SK-N-SH (cell line): ENCODE measurements at regions of chr7 and their contacts with region 1.

Region 1: DNA sequence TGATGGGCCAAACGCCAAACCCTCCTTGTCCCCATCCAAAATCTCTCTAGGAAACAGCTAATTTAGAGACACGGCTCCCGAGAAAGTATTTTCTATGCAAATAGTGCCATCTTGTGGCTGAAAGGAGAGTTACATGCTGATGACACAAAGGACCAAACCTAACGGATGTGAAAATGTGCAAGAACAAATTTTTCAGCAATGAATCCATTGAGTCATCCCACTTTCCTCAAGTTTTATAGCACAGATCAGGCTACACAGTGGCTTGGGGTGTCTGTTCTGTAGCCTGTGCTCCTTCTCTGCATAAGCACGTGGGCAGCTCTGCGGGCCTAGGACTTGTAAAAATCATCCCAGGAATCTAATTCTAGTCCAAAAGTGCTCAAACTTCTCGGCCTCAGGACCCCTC is 154.8 kb upstream of the PRR15 start:
- DNase-seq: peak; percentile 76
- H3K4me3 ChIP-seq: no peak overlapping the region
- H3K27ac ChIP-seq: no peak overlapping the region
- H3K4me1 ChIP-seq: no peaks in the 10 kb centered on the region; a peak in 1 of 4 replicates
- H3K27me3 ChIP-seq: 0 out of 2 replicates have a peak, but pooled peaks cover 4% of the 10 kb centered on the region
- CTCF ChIP-seq: peak; percentile 97
- EP300 ChIP-seq: no peak
- RAD21 ChIP-seq: peak; percentile 99

Region 2: GRCh38 chr7:28955718-28956619 is 452.9 kb before region 1 on chr7:
- CTCF ChIA-PET with region 1: interaction called, 49 read pairs
- POLR2A ChIA-PET with region 1: no interaction called
- DNase-seq: peak; percentile 87
- H3K4me3 ChIP-seq: peak overlapping the region; percentile 52 to 59
- H3K27ac ChIP-seq: peak overlapping the region in 1 of 2 experiments; percentile 100; a peak in 2 of 4 replicates
- H3K4me1 ChIP-seq: peaks cover 11 to 66% of the 10 kb centered on the region in 2 experiments
- H3K27me3 ChIP-seq: peaks cover 36% of the 10 kb centered on the region
- CTCF ChIP-seq: peak; percentile 32
- EP300 ChIP-seq: no peak
- RAD21 ChIP-seq: peak; percentile 63

Region 3: GRCh38 chr7:29105752-29106668 is 302.8 kb before region 1 on chr7:
- CTCF ChIA-PET with region 1: interaction called, 95 read pairs
- POLR2A ChIA-PET with region 1: no interaction called
- DNase-seq: peak; percentile 43
- H3K4me3 ChIP-seq: no peak overlapping the region; a peak in 1 of 4 replicates
- H3K27ac ChIP-seq: no peak overlapping the region; a peak in 1 of 4 replicates
- H3K4me1 ChIP-seq: peaks cover 0 to 16% of the 10 kb centered on the region in 2 experiments; a peak in 1 of 4 replicates
- H3K27me3 ChIP-seq: peaks cover 10% of the 10 kb centered on the region
- CTCF ChIP-seq: peak; percentile 94
- EP300 ChIP-seq: no peak
- RAD21 ChIP-seq: peak; percentile 98

Region 4: DNA sequence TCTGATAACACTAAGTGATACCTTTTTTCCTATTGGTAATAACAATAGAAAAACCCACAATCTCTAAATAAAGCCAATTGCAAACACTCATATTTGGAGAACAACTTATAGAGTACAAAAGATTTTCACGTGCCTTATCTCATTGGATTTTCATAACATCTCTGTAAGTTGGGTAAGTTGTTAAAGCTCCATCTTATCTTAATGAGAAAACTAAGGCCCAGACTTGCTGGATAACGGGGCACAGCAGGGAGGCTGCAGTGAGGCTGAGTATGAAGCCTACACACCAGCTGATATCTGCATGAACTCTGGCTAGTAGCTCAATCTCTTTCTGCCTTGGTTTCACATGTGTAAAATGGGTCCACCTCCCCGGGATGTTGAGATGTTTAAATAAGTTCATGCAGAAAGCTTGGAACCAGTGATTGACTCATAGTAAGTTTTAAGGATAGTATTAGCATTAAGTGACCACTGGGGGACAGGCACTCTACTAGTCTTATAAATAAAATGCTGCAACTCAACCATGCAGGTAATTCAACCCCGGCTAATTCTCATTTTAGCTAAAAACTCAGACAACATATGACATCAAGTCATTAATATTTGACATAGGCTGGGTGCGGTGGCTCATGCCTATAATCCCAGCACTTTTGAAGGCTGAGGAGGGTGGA is 289.2 kb before region 1 on chr7:
- CTCF ChIA-PET with region 1: interaction called, 24 read pairs
- POLR2A ChIA-PET with region 1: no interaction called
- DNase-seq: no peak
- H3K4me3 ChIP-seq: no peak overlapping the region
- H3K27ac ChIP-seq: no peak overlapping the region
- H3K4me1 ChIP-seq: no peaks in the 10 kb centered on the region
- H3K27me3 ChIP-seq: 0 out of 2 replicates have a peak, but pooled peaks cover 5% of the 10 kb centered on the region
- CTCF ChIP-seq: no peak
- EP300 ChIP-seq: no peak
- RAD21 ChIP-seq: no peak

Region 5: GRCh38 chr7:29194594-29195427 is 214.0 kb before region 1 on chr7 and contains the start of gene CHN2:
- CTCF ChIA-PET with region 1: interaction called, 236 read pairs
- POLR2A ChIA-PET with region 1: no interaction called
- DNase-seq: peak; percentile 90
- H3K4me3 ChIP-seq: peak within 1 kb of the TSS; percentile 59 to 61
- H3K27ac ChIP-seq: no peak within 1 kb of the TSS; a peak in 1 of 4 replicates
- H3K4me1 ChIP-seq: peaks cover 0 to 7% of the 10 kb centered on the region in 2 experiments; a peak in 2 of 4 replicates
- H3K27me3 ChIP-seq: peaks cover 48% of the 10 kb centered on the region
- CTCF ChIP-seq: no peak
- EP300 ChIP-seq: no peak
- RAD21 ChIP-seq: 0 out of 2 replicates have a peak, but pooled peaks have one; percentile 13
- polyA plus RNA-seq, gene CHN2: 0.02 TPM in 1 of 2 replicates, not detected in the other

Region 6: GRCh38 chr7:29360633-29361625 is 47.9 kb before region 1 on chr7:
- CTCF ChIA-PET with region 1: interaction called, 11 read pairs
- POLR2A ChIA-PET with region 1: no interaction called
- DNase-seq: no peak
- H3K4me3 ChIP-seq: no peak overlapping the region
- H3K27ac ChIP-seq: no peak overlapping the region
- H3K4me1 ChIP-seq: no peaks in the 10 kb centered on the region
- H3K27me3 ChIP-seq: 0 out of 2 replicates have a peak, but pooled peaks cover 11% of the 10 kb centered on the region
- CTCF ChIP-seq: no peak
- EP300 ChIP-seq: no peak
- RAD21 ChIP-seq: no peak

Region 7: GRCh38 chr7:29424295-29424983 is 15.6 kb after region 1 on chr7:
- CTCF ChIA-PET with region 1: interaction called, 28 read pairs
- POLR2A ChIA-PET with region 1: no interaction called
- DNase-seq: no peak
- H3K4me3 ChIP-seq: no peak overlapping the region
- H3K27ac ChIP-seq: no peak overlapping the region
- H3K4me1 ChIP-seq: no peaks in the 10 kb centered on the region
- H3K27me3 ChIP-seq: peaks cover 4% of the 10 kb centered on the region; the same call in 1 of the 2 replicates
- CTCF ChIP-seq: no peak
- EP300 ChIP-seq: no peak
- RAD21 ChIP-seq: no peak